MCF 10A (cell line): ENCODE measurements at regions of chr1 and their contacts with region 1.

Region 1: GRCh38 chr1:219812491-219813203 is 115.7 kb downstream of the SLC30A10 start:
- DNase-seq: peak; percentile 85
- H3K4me3 Mint-ChIP-seq: no peak overlapping the region
- H3K27ac Mint-ChIP-seq: no peak overlapping the region
- H3K4me1 Mint-ChIP-seq: no peaks in the 10 kb centered on the region
- H3K27me3 Mint-ChIP-seq: no peaks in the 10 kb centered on the region
- CTCF ChIP-seq: peak; percentile 99

Region 2: DNA sequence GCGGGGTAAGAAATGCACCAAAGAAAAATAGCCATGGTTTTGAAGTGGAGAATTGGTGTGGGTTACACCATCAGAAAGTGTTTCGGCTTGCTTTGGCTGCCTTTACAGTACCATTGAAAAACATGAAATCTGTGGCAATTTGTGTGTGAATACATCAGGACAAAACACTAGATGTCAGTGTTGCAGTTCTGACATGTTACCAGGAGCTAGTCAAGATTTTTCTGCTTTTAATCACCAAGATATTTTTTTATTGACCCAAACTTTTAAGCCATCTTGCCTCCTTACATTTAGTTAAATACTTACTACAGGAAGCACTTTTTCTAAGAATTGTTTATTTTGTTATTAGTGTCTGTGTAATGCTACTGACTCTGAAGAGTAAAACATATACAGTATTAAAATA is 1513.2 kb before region 1 on chr1:
- CTCF ChIA-PET with region 1: interaction called, 14 read pairs
- POLR2A ChIA-PET with region 1: no interaction called
- intact Hi-C with region 1: no loop called
- DNase-seq: peak; percentile 70
- H3K4me3 Mint-ChIP-seq: no peak overlapping the region
- H3K27ac Mint-ChIP-seq: no peak overlapping the region
- H3K4me1 Mint-ChIP-seq: peaks cover 41% of the 10 kb centered on the region
- H3K27me3 Mint-ChIP-seq: no peaks in the 10 kb centered on the region
- CTCF ChIP-seq: peak; percentile 68

Region 3: GRCh38 chr1:219209578-219209977 is 603.1 kb before region 1 on chr1:
- CTCF ChIA-PET with region 1: interaction called, 7 read pairs
- POLR2A ChIA-PET with region 1: no interaction called
- intact Hi-C with region 1: loop called (anchors 1 kb)
- DNase-seq: no peak
- H3K4me3 Mint-ChIP-seq: no peak overlapping the region
- H3K27ac Mint-ChIP-seq: no peak overlapping the region
- H3K4me1 Mint-ChIP-seq: no peaks in the 10 kb centered on the region
- H3K27me3 Mint-ChIP-seq: no peaks in the 10 kb centered on the region
- CTCF ChIP-seq: no peak

Region 4: DNA sequence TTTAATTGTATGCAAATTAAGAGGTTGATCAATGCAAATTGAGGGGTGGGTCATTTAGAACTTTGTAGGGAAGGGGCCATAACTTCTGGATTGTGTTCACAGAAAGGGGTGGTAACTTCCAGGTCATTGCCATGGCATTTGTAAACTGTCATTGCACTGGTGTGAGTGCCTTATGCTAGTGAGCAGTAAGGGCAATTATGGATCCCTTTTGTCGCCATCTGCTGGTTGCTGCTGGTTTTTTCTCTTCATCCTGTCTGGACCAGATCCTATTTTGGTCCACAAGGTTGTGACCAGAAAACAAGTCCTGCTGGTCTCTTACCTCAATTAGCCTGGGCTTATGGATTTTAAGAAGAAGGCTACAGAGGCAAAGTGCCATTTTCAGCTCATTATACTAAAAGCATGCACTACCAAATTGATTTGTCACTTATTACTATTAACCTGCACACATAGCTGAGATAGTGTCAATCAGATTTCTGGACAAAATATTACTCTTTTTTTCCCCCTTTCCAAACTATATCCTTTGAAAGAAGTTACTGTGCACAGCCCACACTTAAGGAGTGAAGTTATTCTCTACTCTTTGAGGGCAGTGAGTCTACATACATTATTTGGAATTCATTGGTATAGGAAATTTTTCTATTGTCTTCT is 395.9 kb before region 1 on chr1:
- CTCF ChIA-PET with region 1: interaction called, 6 read pairs
- POLR2A ChIA-PET with region 1: no interaction called
- intact Hi-C with region 1: loop called (anchors 1 kb)
- DNase-seq: peak; percentile 85
- H3K4me3 Mint-ChIP-seq: no peak overlapping the region
- H3K27ac Mint-ChIP-seq: no peak overlapping the region
- H3K4me1 Mint-ChIP-seq: no peaks in the 10 kb centered on the region
- H3K27me3 Mint-ChIP-seq: peaks cover 83% of the 10 kb centered on the region
- CTCF ChIP-seq: peak; percentile 92

Region 5: GRCh38 chr1:219518168-219518907 is 294.3 kb before region 1 on chr1:
- CTCF ChIA-PET with region 1: no interaction called
- POLR2A ChIA-PET with region 1: no interaction called
- intact Hi-C with region 1: no loop called
- DNase-seq: peak; percentile 55
- H3K4me3 Mint-ChIP-seq: no peak overlapping the region
- H3K27ac Mint-ChIP-seq: no peak overlapping the region
- H3K4me1 Mint-ChIP-seq: no peaks in the 10 kb centered on the region
- H3K27me3 Mint-ChIP-seq: peaks cover 50% of the 10 kb centered on the region
- CTCF ChIP-seq: no peak

Region 6: GRCh38 chr1:219587805-219588561 is 224.7 kb before region 1 on chr1:
- CTCF ChIA-PET with region 1: interaction called, 20 read pairs
- POLR2A ChIA-PET with region 1: no interaction called
- intact Hi-C with region 1: no loop called
- DNase-seq: no peak
- H3K4me3 Mint-ChIP-seq: no peak overlapping the region
- H3K27ac Mint-ChIP-seq: no peak overlapping the region
- H3K4me1 Mint-ChIP-seq: peaks cover 7% of the 10 kb centered on the region
- H3K27me3 Mint-ChIP-seq: peaks cover 34% of the 10 kb centered on the region
- CTCF ChIP-seq: no peak

Region 7: GRCh38 chr1:219670426-219671149 is 142.1 kb before region 1 on chr1:
- CTCF ChIA-PET with region 1: interaction called, 11 read pairs
- POLR2A ChIA-PET with region 1: no interaction called
- intact Hi-C with region 1: no loop called
- DNase-seq: no peak
- H3K4me3 Mint-ChIP-seq: no peak overlapping the region
- H3K27ac Mint-ChIP-seq: no peak overlapping the region
- H3K4me1 Mint-ChIP-seq: no peaks in the 10 kb centered on the region
- H3K27me3 Mint-ChIP-seq: peaks cover 72% of the 10 kb centered on the region
- CTCF ChIP-seq: no peak

Region 8: DNA sequence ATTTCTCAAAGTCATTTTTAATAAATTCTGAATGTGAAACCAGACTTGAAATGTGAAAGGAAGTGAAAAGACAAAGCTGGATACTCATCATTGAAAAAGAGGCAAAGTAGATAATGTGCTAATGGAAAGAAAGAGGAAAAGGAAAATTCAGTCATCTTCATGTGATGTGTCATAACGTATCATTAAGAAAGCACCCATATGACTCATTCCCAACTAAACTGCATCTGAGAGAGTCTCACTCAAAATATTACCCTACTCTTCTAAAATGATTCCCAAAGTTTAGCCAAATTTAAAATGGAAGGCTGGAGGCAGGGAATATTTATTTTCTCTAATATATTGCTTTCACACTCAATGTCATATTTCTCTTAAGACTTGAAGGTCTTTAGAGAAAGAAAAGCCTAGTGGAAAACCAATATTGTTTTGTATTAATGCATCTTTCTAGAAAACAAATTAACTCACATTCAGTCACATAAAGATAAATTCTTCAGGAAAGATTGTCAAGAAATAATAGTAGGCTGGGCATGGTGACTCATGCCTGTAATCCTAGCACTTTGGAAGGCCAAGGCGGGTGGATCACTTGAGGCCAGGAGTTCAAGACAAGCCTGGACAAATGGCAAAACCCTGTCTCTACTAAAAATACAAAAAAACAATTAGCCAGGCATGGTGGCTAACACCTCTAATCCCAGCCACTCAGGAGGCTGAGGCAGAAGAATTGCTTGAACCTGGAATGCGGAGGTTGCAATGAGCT is 14.2 kb before region 1 on chr1:
- CTCF ChIA-PET with region 1: interaction called, 45 read pairs
- POLR2A ChIA-PET with region 1: interaction called, 4 read pairs
- intact Hi-C with region 1: no loop called
- DNase-seq: peak; percentile 66
- H3K4me3 Mint-ChIP-seq: no peak overlapping the region
- H3K27ac Mint-ChIP-seq: no peak overlapping the region
- H3K4me1 Mint-ChIP-seq: peaks cover 6% of the 10 kb centered on the region
- H3K27me3 Mint-ChIP-seq: peaks cover 58% of the 10 kb centered on the region
- CTCF ChIP-seq: no peak